ENCODE measurements at regions of chr1 and their contacts with region 1.

Region 1: DNA sequence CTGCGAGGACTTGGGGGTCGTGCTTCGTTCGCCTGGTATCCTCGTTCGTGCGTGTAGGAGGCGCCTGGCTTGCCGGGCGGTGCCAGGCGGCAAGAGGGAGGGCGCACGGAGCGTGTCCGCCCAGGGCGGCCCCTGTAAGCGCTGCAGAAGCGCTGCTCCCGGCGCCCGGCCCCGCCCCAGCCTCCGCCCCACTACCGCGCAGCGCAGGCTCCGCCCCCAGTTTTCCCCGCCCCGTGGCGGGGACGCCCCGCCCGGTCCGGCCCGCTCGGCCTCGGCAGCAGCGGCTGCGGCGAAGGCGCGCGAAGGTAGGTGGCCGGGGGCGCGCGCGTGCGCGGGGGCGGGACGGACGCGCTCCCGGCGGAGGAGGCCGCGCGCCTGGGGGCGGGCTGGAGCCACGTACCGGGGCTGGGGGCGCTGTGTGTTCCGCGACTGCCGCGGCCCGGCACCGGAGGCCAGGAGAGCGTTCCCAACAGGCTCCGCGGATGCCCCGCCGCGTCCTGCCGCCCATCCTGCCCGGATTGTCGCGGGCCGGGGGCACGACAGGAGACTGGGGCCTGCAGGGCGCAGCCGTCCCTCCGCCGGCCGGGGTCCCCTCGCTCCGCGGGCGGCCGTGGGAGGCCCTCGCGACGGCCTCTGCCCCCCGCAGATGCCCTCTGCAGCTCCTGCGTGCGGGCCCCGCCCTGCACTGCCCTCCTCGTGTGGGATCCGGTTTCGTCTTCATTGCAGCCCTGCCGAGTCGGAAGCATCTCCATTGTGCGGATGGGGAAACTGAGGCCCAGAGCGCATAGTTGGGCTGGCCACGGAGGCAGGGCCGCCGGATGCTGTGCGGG is 7.7 kb upstream of the CROCC start:
- DNase-seq: peak; percentile 82 to 100 (median 90)
- ATAC-seq: peak; percentile 98
- H3K4me3 ChIP-seq: peak overlapping the region; percentile 94
- H3K4me3 Mint-ChIP-seq: peak overlapping the region; percentile 82 to 92 (median 88)
- H3K27ac ChIP-seq: peak overlapping the region; percentile 82
- H3K27ac Mint-ChIP-seq: peak overlapping the region; percentile 72 to 91 (median 87)
- H3K4me1 ChIP-seq: peaks cover 10 to 11% of the 10 kb centered on the region in 2 donors
- H3K4me1 Mint-ChIP-seq: peaks cover 33 to 49% (median 44%) of the 10 kb centered on the region in 7 donors
- H3K27me3 ChIP-seq: no peaks in the 10 kb centered on the region
- H3K27me3 Mint-ChIP-seq: peaks cover 0 to 10% (median 0%) of the 10 kb centered on the region in 5 donors

Region 2: DNA sequence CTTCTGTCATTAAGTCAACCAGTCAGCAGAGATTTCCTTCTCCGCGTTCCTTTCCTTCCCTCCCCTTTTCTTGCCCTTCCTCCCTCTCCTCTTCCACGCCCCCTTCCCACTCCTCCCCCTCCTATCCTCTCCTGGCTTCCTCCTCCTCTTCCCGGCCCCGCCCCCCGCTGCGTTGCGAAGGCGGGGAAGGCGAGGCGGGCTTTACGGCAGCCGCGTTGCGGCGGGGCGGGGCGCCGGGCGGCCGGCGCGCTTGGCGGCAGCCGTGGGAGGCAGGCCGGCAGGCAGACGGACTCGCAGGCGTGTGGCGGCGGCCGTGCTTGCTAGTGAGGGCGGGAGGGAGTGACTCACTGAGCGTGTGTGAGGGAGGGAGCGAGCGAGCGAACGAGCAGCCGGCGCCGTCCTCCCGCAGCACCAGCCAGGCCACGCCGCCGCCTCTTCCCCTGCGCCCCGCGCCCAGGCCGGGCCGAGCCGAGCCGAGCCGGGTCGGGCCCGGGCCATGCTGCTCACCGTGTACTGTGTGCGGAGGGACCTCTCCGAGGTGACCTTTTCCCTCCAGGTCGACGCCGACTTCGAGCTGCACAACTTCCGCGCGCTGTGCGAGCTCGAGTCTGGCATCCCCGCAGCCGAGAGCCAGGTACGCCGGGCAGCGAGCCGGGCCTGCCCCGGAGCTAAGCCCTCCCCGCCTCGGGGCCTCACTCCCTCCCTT is 1296.7 kb before region 1 on chr1 and contains the start of gene DDI2:
- CTCF ChIA-PET with region 1: no interaction called
- POLR2A ChIA-PET with region 1: no interaction called
- intact Hi-C with region 1: loop called in 1 of 2 experiments (anchors 5 kb)
- DNase-seq: peak; percentile 86 to 97 (median 88)
- ATAC-seq: peak; percentile 94
- H3K4me3 ChIP-seq: peak within 1 kb of the TSS; percentile 96
- H3K4me3 Mint-ChIP-seq: peak within 1 kb of the TSS; percentile 83 to 96 (median 94)
- H3K27ac ChIP-seq: peak within 1 kb of the TSS; percentile 88
- H3K27ac Mint-ChIP-seq: peak within 1 kb of the TSS; percentile 84 to 96 (median 92)
- H3K4me1 ChIP-seq: peaks cover 20 to 30% of the 10 kb centered on the region in 2 donors
- H3K4me1 Mint-ChIP-seq: peaks cover 29 to 51% (median 43%) of the 10 kb centered on the region in 7 donors
- H3K27me3 ChIP-seq: no peaks in the 10 kb centered on the region
- H3K27me3 Mint-ChIP-seq: no peaks in the 10 kb centered on the region
- total RNA-seq, gene DDI2: 24.5 to 46.8 (median 37.0) TPM

Region 3: GRCh38 chr1:16266411-16267118 is 647.5 kb before region 1 on chr1:
- CTCF ChIA-PET with region 1: no interaction called
- POLR2A ChIA-PET with region 1: no interaction called
- intact Hi-C with region 1: no loop called
- DNase-seq: no peak
- ATAC-seq: no peak
- H3K4me3 ChIP-seq: no peak overlapping the region
- H3K4me3 Mint-ChIP-seq: no peak overlapping the region
- H3K27ac ChIP-seq: no peak overlapping the region
- H3K27ac Mint-ChIP-seq: peak overlapping the region in 5 of 9 donors; percentile 7 to 78 (median 32)
- H3K4me1 ChIP-seq: no peaks in the 10 kb centered on the region
- H3K4me1 Mint-ChIP-seq: peaks cover 6 to 43% (median 32%) of the 10 kb centered on the region in 7 donors
- H3K27me3 ChIP-seq: no peaks in the 10 kb centered on the region
- H3K27me3 Mint-ChIP-seq: no peaks in the 10 kb centered on the region

Region 4: DNA sequence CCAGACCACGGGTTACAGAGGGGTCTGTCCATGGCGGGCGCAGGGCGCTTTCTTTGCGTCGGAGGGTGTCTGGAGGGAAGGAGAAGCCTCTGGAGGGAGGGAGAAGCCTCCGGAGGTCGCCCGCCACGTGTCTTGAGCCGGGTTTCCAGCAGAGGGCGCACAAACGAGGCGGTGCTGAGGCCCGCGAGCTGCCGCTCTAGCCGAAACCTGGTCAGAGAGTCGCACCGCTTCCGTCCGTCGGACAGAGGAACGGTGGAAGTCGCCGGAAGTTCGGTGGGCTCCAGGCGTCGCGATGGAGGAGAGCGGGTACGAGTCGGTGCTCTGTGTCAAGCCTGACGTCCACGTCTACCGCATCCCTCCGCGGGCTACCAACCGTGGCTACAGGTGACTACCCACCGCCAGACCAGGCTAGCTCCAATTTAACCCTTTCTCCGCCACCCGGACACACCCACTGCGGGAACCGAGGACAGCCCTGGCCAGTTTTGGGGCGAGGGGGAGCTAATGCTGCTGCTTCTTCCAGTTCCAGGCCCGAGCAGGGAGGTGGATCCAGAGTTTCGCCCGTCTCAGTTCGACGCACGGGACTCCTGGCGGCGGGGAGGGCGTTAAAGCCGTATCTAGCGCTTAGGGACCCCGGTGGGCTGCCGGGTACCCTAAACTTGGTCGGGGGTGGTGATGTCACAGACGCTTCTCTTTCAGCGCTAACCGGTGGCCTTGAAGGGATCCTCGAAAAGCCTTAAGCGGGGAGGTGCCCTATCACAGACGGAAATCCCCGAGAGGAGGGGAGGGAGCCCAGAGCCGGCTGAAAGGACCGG is 473.4 kb before region 1 on chr1 and contains the start of gene NECAP2:
- CTCF ChIA-PET with region 1: no interaction called
- POLR2A ChIA-PET with region 1: no interaction called
- intact Hi-C with region 1: loop called in 1 of 2 experiments (anchors 5 kb)
- DNase-seq: peak; percentile 79 to 95 (median 88)
- ATAC-seq: peak; percentile 95
- H3K4me3 ChIP-seq: peak within 1 kb of the TSS; percentile 94
- H3K4me3 Mint-ChIP-seq: peak within 1 kb of the TSS; percentile 93 to 100 (median 97)
- H3K27ac ChIP-seq: peak within 1 kb of the TSS; percentile 100
- H3K27ac Mint-ChIP-seq: peak within 1 kb of the TSS; percentile 88 to 98 (median 96)
- H3K4me1 ChIP-seq: peaks cover 17 to 33% of the 10 kb centered on the region in 2 donors
- H3K4me1 Mint-ChIP-seq: peaks cover 19 to 45% (median 34%) of the 10 kb centered on the region in 7 donors
- H3K27me3 ChIP-seq: no peaks in the 10 kb centered on the region
- H3K27me3 Mint-ChIP-seq: no peaks in the 10 kb centered on the region
- total RNA-seq, gene NECAP2: 98.2 to 161 (median 148) TPM

Region 5: DNA sequence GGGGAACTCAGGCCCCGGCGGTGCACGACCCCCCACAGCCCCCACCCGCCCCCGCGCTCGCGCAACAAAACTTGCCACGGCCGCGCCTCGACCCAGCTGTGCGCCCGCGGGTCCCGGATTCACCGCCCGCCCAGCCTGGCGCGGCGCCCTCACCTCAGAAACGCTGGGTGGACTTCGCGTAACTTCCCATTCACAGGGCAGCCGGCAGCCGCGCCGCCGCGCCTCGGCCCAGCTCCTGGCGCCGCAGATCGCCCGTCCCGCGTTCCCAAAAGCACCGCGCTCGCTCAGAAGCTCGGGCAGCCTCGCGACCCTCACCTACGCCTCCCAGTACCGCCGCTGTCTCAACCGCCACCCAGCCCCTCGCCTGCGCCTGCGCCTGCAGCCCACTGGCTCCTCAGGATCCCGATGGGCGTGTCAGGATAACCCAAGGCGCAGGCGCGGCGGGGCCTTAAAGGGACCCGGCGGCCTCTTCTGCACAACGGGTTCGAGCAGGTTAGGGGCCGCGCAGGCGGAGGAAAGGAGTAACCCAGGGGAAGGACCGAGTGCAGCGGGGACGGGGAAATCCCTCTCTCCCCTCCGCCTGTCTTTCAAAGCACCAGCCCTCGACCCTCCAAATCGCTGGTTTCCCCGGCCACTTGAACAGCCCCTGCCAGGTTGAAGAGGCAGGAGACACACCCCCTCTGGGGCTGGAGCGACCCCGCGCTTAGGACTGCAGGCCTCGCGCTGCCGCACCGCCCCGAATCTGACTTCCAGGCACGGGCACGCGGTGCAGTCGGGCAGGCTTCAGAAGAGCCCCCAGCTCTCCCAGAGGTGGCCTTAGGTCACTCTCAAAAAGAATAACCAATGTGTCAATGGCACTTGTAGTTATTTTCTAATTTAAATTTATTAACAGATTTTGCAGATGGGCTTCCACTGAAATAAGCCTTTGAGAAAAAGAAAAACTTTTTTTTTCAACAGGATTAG is 300.6 kb before region 1 on chr1 and contains the start of gene NBPF1:
- CTCF ChIA-PET with region 1: no interaction called
- POLR2A ChIA-PET with region 1: no interaction called
- intact Hi-C with region 1: loop called in 1 of 2 experiments (anchors 10 kb)
- DNase-seq: peak; percentile 79 to 97 (median 87)
- ATAC-seq: peak; percentile 93
- H3K4me3 ChIP-seq: peak within 1 kb of the TSS; percentile 72
- H3K4me3 Mint-ChIP-seq: no peak within 1 kb of the TSS
- H3K27ac ChIP-seq: peak within 1 kb of the TSS; percentile 70
- H3K27ac Mint-ChIP-seq: no peak within 1 kb of the TSS
- H3K4me1 ChIP-seq: peaks cover 15 to 16% of the 10 kb centered on the region in 2 donors
- H3K4me1 Mint-ChIP-seq: no peaks in the 10 kb centered on the region
- H3K27me3 ChIP-seq: no peaks in the 10 kb centered on the region
- H3K27me3 Mint-ChIP-seq: no peaks in the 10 kb centered on the region
- total RNA-seq, gene NBPF1: 7.0 to 25.7 (median 20.7) TPM

Region 6: DNA sequence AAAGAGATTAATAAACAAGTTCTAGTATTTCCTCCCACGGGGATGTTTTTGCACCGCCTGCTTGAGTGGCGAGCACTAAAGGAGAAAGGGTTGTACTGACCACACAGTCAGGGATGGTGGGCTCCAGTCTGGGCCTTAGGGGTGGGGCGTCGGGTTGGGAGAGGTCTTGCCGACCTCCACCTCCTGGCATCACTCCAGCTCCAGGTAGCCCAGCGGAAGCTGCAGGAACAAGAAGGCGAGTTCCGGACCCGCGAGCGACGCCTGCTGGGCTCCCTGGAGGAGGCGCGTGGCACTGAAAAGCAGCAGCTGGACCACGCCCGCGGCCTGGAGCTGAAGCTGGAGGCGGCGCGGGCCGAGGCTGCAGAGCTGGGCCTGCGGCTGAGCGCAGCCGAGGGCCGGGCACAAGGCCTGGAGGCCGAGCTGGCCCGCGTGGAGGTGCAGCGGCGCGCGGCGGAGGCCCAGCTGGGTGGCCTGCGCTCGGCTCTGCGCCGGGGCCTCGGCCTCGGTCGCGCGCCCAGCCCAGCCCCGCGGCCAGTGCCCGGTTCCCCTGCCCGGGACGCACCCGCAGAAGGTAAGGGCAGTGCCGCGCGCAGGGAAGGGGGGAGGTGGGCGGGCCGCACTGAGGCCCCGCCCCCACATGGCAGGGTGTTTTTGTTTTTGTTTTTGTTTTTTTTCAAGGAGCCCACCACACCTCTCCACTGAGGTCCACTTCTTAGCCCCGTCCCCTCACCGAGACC is 46.7 kb after region 1 on chr1:
- CTCF ChIA-PET with region 1: no interaction called
- POLR2A ChIA-PET with region 1: interaction called, 3 read pairs
- intact Hi-C with region 1: loop called in 1 of 2 experiments (anchors 2 kb)
- DNase-seq: peak; percentile 50 to 83 (median 66)
- ATAC-seq: peak; percentile 92
- H3K4me3 ChIP-seq: peak overlapping the region; percentile 40
- H3K4me3 Mint-ChIP-seq: peak overlapping the region; percentile 71 to 87 (median 82)
- H3K27ac ChIP-seq: peak overlapping the region; percentile 48
- H3K27ac Mint-ChIP-seq: peak overlapping the region; percentile 14 to 83 (median 68)
- H3K4me1 ChIP-seq: peaks cover 0 to 4% of the 10 kb centered on the region in 2 donors
- H3K4me1 Mint-ChIP-seq: peaks cover 4 to 14% (median 10%) of the 10 kb centered on the region in 7 donors
- H3K27me3 ChIP-seq: no peaks in the 10 kb centered on the region
- H3K27me3 Mint-ChIP-seq: no peaks in the 10 kb centered on the region

Region 7: DNA sequence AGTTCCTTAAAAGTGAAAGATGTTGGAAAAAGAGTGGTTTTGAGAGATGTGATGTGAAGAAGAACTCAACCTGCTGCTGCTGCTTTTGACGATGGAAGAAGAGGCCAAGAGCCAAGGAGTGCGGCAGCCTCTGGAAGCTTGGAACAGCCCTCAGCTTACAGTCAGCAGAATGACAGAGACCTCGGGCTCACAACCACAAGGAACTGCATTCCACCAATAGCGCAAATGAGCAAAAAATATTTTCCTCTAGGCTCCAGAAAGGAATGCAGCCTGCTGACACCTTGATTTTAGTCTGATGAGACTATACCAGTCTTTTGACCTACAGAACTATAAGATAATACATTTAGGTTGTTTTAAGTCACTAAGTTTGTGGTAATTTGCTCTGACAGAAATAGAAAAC is 129.6 kb after region 1 on chr1:
- CTCF ChIA-PET with region 1: no interaction called
- POLR2A ChIA-PET with region 1: no interaction called
- intact Hi-C with region 1: no loop called
- DNase-seq: no peak
- ATAC-seq: no peak
- H3K4me3 ChIP-seq: no peak overlapping the region
- H3K4me3 Mint-ChIP-seq: no peak overlapping the region
- H3K27ac ChIP-seq: no peak overlapping the region
- H3K27ac Mint-ChIP-seq: peak overlapping the region in 2 of 9 donors; percentile 8 to 82
- H3K4me1 ChIP-seq: peaks cover 0 to 3% of the 10 kb centered on the region in 2 donors
- H3K4me1 Mint-ChIP-seq: peaks cover 9 to 27% (median 18%) of the 10 kb centered on the region in 7 donors
- H3K27me3 ChIP-seq: no peaks in the 10 kb centered on the region
- H3K27me3 Mint-ChIP-seq: no peaks in the 10 kb centered on the region

Region 8: GRCh38 chr1:17053685-17054410 is 139.8 kb after region 1 on chr1 and contains the start of gene SDHB:
- CTCF ChIA-PET with region 1: no interaction called
- POLR2A ChIA-PET with region 1: interaction called, 4 read pairs
- intact Hi-C with region 1: loop called (anchors 1 kb)
- DNase-seq: peak; percentile 97 to 100 (median 100)
- ATAC-seq: peak; percentile 99
- H3K4me3 ChIP-seq: peak within 1 kb of the TSS; percentile 77
- H3K4me3 Mint-ChIP-seq: peak within 1 kb of the TSS; percentile 87 to 99 (median 98)
- H3K27ac ChIP-seq: peak within 1 kb of the TSS; percentile 81
- H3K27ac Mint-ChIP-seq: peak within 1 kb of the TSS; percentile 94 to 99 (median 97)
- H3K4me1 ChIP-seq: peaks cover 13 to 14% of the 10 kb centered on the region in 2 donors
- H3K4me1 Mint-ChIP-seq: peaks cover 8 to 39% (median 33%) of the 10 kb centered on the region in 7 donors
- H3K27me3 ChIP-seq: no peaks in the 10 kb centered on the region
- H3K27me3 Mint-ChIP-seq: peaks cover 0 to 7% (median 6%) of the 10 kb centered on the region in 5 donors
- total RNA-seq, gene SDHB: 53.3 to 81.3 (median 61.1) TPM

Measured in naive thymus-derived CD4-positive, alpha-beta T cell (primary cell).